Posterior vena cava (tissue), 2 donors: ENCODE measurements at regions of chr13 and their contacts with region 1.

Region 1: GRCh38 chr13:50401049-50401505 is 385.8 kb downstream of the KCNRG start:
- DNase-seq: no peak

Region 2: DNA sequence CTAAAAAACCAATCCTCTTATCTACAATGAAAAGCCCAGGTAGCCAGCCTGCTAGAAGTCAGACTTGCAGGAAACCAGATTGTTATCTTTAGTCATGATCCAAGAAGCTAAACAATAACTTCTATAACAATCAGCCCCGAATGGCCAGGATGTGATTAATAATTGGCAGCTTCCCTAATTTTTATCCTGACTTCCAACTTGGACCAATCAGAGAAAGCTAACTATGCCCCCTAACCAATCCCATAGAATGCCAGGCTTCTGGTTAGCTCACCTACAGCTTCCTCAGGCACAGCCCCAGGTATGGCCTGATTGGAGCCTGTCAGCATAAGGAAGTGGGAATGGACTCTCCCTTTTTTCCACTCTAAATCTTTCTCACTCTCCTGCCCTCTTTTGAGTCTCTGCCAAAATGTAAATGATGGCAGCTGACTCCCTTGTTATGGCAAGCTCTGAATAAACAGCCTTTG is 47.5 kb after region 1 on chr13:
- intact Hi-C with region 1: loop called in 1 of 2 experiments (anchors 1 kb)
- DNase-seq: no peak